IMR-90 (cell line): ENCODE measurements at regions of chr15 and their contacts with region 1.

Region 1: DNA sequence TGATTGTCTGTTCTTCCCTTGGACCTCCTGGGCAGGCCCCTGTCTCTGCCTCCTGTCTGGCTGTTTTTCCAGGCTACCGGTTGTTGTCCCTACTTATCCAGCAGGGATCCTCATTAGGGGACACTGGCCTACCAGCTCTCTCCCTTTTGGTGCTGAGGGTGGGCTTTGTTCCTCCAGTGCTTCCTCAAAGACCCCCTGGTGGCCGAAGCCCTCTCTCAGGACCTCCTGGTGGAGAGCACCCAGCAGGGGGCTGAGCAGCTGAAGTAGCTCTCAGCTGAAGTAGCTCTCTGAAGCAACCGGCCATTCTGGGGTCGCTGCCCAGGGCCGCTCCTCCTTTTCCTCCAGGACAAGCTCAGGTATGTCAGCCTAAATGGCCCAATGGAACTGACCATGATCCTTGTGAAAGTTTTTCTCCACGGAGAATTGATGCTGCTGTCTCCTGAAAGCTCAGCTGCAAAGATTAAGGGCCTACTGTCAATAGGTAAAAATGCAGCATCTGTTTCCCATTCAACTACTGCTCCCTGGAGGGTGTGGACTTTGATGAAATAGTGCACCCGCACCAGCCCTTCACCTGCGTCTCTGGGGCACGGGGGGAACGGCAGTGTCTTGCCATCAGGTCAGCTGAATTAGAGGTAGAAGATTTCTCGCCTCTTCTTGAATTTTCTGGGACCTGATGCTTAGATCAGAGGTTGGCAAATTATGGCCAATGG is 27.6 kb downstream of the ARNT2 start:
- DNase-seq: no peak
- ATAC-seq: no peak
- H3K4me3 ChIP-seq: no peak overlapping the region
- H3K27ac ChIP-seq: no peak overlapping the region
- H3K4me1 ChIP-seq: peaks cover 10% of the 10 kb centered on the region
- H3K27me3 ChIP-seq: no peaks in the 10 kb centered on the region
- CTCF ChIP-seq: 0 out of 2 replicates have a peak, but pooled peaks have one; percentile 2
- POLR2A ChIP-seq: no peak
- RAD21 ChIP-seq: no peak

Region 2: DNA sequence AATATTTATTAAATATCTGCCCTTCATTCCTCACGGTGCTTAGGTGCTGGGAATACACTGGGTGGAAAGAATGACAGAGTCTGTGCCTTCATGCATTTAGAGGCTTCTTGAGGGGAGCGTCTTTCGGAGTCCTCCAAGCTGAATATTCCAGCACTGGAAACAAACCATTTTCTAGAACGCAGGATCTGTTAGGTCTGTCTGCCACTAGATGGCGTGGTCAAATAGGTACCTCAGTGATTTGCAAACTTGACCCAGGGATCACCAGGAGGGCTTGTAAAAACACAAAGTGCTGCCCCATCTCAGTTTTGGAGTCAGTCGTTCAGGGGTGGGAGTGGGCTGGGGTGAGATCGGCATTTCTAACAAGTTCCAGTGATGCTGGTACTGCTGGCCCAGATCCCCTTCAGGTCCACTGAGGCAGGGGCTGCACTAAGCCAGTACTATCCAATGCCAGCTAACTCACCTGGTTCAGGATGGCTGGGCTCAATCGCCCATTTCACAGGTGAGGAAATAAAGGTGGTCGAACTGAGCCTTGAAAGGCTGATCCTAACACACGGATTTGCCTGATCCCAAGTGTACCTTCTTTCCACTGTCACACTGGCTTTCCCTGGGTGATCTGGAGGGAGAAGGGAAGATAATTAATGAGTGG is 12.8 kb before region 1 on chr15:
- CTCF ChIA-PET with region 1: interaction called, 3 read pairs
- POLR2A ChIA-PET with region 1: interaction called, 12 read pairs
- dilution Hi-C with region 1: no loop called
- in situ Hi-C with region 1: no loop called
- intact Hi-C with region 1: no loop called
- DNase-seq: peak; percentile 72
- ATAC-seq: peak; percentile 59
- H3K4me3 ChIP-seq: no peak overlapping the region
- H3K27ac ChIP-seq: peak overlapping the region; percentile 19
- H3K4me1 ChIP-seq: peaks cover 14% of the 10 kb centered on the region
- H3K27me3 ChIP-seq: no peaks in the 10 kb centered on the region
- CTCF ChIP-seq: peak; percentile 68
- POLR2A ChIP-seq: no peak
- RAD21 ChIP-seq: peak; percentile 56

Region 3: GRCh38 chr15:80464951-80465625 is 33.3 kb after region 1 on chr15:
- CTCF ChIA-PET with region 1: no interaction called
- POLR2A ChIA-PET with region 1: no interaction called
- dilution Hi-C with region 1: no loop called
- in situ Hi-C with region 1: no loop called
- intact Hi-C with region 1: no loop called
- DNase-seq: peak; percentile 69
- ATAC-seq: peak; percentile 74
- H3K4me3 ChIP-seq: no peak overlapping the region
- H3K27ac ChIP-seq: peak overlapping the region; percentile 45; the same call in 1 of the 2 replicates
- H3K4me1 ChIP-seq: peaks cover 28% of the 10 kb centered on the region
- H3K27me3 ChIP-seq: no peaks in the 10 kb centered on the region
- CTCF ChIP-seq: no peak
- POLR2A ChIP-seq: no peak
- RAD21 ChIP-seq: no peak